ENCODE measurements at regions of chr4 and their contacts with region 1.

Region 1: DNA sequence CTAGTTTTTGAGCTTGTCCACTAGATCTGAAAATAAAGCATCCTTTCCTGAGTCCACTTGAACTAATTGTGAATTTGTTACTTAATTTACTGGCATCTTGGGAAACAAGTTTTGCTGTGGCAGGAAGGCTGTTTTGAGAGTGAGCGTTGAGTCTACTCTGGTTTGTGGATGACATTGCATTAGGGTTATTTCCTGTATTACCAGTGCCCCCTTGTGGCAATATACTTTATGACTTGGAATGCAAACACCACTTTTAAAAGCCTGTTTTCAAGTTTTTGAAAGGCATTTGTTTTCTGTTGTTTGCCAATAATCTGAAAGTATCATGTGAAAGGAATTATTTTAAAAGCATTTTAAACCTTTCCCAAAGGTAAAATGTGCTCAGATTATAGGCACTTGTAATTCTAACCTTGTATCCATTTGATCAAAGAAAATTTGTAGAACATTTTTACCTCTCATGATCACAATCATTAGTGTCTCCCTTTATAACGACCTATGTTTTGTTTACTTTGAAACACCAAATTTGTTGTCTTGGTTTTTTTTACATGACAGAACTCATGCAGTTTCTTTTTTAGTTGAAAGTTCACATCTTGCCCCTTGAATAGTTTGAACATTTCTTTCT is 18.0 kb upstream of the CYP2U1 start:
- DNase-seq: peak in 1 of 2 donors; percentile 80
- ATAC-seq: peak; percentile 85 to 98 (median 95)
- H3K4me3 ChIP-seq: no peak overlapping the region
- H3K4me3 Mint-ChIP-seq: no peak overlapping the region
- H3K27ac ChIP-seq: no peak overlapping the region
- H3K27ac Mint-ChIP-seq: no peak overlapping the region
- H3K4me1 ChIP-seq: no peaks in the 10 kb centered on the region
- H3K4me1 Mint-ChIP-seq: no peaks in the 10 kb centered on the region
- H3K27me3 ChIP-seq: no peaks in the 10 kb centered on the region
- H3K27me3 Mint-ChIP-seq: peaks cover under 1 to 5% of the 10 kb centered on the region in 2 donors
- CTCF ChIP-seq: peak; percentile 79

Region 2: GRCh38 chr4:107586321-107586720 is 327.1 kb before region 1 on chr4:
- intact Hi-C with region 1: no loop called
- DNase-seq: no peak
- ATAC-seq: no peak
- H3K4me3 ChIP-seq: no peak overlapping the region
- H3K4me3 Mint-ChIP-seq: no peak overlapping the region
- H3K27ac ChIP-seq: no peak overlapping the region
- H3K27ac Mint-ChIP-seq: no peak overlapping the region
- H3K4me1 ChIP-seq: no peaks in the 10 kb centered on the region
- H3K4me1 Mint-ChIP-seq: no peaks in the 10 kb centered on the region
- H3K27me3 ChIP-seq: no peaks in the 10 kb centered on the region
- H3K27me3 Mint-ChIP-seq: no peaks in the 10 kb centered on the region
- CTCF ChIP-seq: no peak

Region 3: GRCh38 chr4:107736924-107737448 is 176.4 kb before region 1 on chr4:
- intact Hi-C with region 1: no loop called
- DNase-seq: peak; percentile 21 to 76
- ATAC-seq: peak; percentile 57 to 77 (median 76)
- H3K4me3 ChIP-seq: no peak overlapping the region
- H3K4me3 Mint-ChIP-seq: no peak overlapping the region
- H3K27ac ChIP-seq: no peak overlapping the region
- H3K27ac Mint-ChIP-seq: no peak overlapping the region
- H3K4me1 ChIP-seq: no peaks in the 10 kb centered on the region
- H3K4me1 Mint-ChIP-seq: no peaks in the 10 kb centered on the region
- H3K27me3 ChIP-seq: no peaks in the 10 kb centered on the region
- H3K27me3 Mint-ChIP-seq: peaks cover 6 to 10% of the 10 kb centered on the region in 2 donors
- CTCF ChIP-seq: peak; percentile 80

Region 4: DNA sequence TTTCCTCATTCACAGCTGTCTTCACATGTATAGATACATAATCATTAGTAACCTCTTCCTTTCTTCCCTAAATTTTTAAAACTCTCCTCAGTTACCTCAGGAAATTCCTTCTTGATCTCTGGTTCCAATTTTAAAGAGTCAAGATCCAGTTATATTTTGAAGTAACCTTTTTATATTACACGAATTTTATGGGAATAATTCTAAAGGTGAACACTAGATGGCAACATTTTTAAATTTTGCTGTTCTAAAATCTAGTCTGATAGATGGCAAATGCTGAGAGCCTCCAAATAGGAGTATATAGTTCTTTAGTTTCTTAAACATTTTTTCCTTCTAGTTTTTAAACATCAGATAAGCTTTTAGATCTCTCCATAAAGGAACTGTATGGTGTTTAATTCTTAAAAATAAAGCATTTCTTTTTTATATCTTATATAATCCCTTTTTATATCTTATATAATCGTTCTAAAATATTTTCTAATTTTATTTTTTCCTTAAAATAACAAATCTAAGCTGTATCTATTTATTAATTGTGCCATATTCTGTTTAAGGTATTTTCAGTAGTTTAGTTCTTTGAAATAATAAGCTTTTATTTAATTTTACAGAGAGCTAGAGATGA is 155.4 kb before region 1 on chr4:
- intact Hi-C with region 1: loop called (anchors 1 kb)
- DNase-seq: peak in 1 of 2 donors; percentile 40
- ATAC-seq: peak in 1 of 3 donors; percentile 40
- H3K4me3 ChIP-seq: no peak overlapping the region
- H3K4me3 Mint-ChIP-seq: no peak overlapping the region
- H3K27ac ChIP-seq: no peak overlapping the region
- H3K27ac Mint-ChIP-seq: no peak overlapping the region
- H3K4me1 ChIP-seq: no peaks in the 10 kb centered on the region
- H3K4me1 Mint-ChIP-seq: peaks cover 4 to 7% of the 10 kb centered on the region in 2 donors
- H3K27me3 ChIP-seq: no peaks in the 10 kb centered on the region
- H3K27me3 Mint-ChIP-seq: peaks cover 0 to 6% of the 10 kb centered on the region in 2 donors
- CTCF ChIP-seq: peak; percentile 72

Measured in natural killer cell (primary cell).